AG04449 (cell line): ENCODE measurements at regions of chr10 and their contacts with region 1.

Region 1: GRCh38 chr10:117442944-117443685 is 67.9 kb upstream of the PDZD8 start:
- DNase-seq: no peak
- H3K4me3 ChIP-seq: peak overlapping the region; percentile 27
- CTCF ChIP-seq: peak; percentile 95

Region 2: GRCh38 chr10:117126034-117126433 is 317.1 kb before region 1 on chr10:
- CTCF ChIA-PET with region 1: no interaction called
- POLR2A ChIA-PET with region 1: no interaction called
- DNase-seq: no peak
- H3K4me3 ChIP-seq: no peak overlapping the region
- CTCF ChIP-seq: no peak

Region 3: DNA sequence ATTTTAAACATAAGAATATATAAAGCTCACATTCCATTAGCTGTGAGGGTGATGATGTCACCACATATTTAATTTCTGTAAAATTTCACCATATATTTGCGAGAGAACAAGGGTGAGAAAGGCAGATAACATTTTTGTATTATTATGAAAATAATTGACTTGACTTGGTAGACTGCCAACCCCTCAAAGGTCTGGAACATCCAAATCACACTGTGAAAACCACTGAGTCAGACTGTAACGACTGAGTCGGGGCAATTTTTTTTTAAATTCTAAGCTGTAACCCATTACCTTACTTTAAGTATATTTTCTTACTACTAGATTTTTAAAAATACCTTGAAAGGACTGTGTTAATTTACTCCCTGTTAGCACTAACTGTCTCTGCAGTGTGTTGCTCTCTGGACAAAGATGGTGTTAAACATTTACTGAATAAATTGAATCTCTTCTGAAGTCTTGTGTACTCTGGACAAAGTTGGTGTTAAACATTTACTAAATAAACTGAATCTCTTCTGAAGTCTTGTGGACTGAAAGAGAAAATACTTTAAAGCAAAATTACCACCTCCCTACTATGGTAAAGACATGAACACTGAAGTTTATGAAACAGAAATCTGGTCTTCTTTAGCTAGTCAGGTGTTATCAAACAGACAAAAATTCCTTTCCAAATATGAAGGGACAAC is 82.0 kb before region 1 on chr10:
- CTCF ChIA-PET with region 1: no interaction called
- POLR2A ChIA-PET with region 1: no interaction called
- DNase-seq: no peak
- H3K4me3 ChIP-seq: no peak overlapping the region
- CTCF ChIP-seq: no peak

Region 4: DNA sequence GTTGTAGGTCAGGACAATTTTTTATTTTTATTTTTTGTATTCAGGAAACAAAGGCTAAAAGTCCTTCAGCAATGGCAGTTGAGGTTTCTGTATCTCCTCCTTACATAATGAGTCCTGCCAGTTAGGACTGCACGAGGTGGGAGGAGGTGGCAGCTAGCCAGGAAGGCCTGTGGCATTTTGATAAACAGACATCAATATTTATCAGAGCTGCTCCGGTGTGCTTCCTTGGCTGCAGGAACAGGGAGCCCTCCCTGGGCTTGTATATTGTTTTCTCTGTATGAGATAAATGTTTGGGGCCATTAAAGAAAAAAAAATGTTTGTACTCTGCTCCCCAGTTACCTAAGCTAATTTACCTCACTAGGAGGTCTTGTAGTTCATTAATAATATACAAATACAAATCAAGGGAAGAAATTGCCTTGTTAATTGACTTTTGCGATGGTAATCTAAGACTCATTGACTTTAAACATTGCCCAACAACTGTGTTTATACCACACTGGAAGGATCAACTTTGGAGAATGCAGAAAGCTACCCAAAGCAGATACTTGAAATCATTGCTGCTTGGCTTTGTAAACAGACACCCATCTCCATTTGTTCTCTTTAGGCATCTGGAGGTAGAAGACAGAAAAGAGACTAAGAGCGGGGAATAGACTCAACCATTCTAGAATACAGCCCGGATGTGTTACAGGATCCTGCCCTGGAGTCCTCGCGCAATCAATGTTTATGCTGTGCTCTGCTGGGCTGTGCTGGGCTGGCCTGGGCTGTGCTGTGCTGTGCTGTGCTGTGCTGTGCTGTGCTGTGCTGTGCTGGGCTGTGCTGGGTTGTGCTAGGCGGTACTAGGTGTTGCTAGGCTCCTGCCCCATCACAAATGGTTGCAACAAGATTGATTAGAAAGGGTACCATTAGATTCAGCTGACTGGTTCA is 31.4 kb before region 1 on chr10:
- CTCF ChIA-PET with region 1: interaction called, 10 read pairs
- POLR2A ChIA-PET with region 1: no interaction called
- DNase-seq: no peak
- H3K4me3 ChIP-seq: no peak overlapping the region
- CTCF ChIP-seq: no peak

Region 5: DNA sequence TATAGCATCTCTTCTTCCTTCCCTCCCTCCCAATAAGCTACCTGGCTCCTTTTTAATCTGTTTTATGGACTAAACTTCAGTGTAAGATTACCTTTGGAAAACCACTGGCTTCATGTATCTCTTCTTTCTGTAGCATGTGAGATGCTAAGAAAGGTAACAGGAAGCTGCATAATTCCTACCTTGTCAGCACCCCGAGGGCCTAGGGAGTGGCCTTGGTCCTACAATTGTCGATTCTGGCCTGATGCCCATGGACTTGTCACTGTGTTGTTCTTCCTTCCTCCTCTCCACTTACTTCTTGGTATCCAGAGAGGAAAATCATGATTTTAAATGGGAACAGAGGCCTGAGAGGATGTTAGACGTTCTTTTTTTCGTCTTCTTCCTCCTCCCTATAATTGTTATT is 25.0 kb before region 1 on chr10:
- CTCF ChIA-PET with region 1: interaction called, 10 read pairs
- POLR2A ChIA-PET with region 1: no interaction called
- DNase-seq: no peak
- H3K4me3 ChIP-seq: no peak overlapping the region
- CTCF ChIP-seq: no peak

Region 6: DNA sequence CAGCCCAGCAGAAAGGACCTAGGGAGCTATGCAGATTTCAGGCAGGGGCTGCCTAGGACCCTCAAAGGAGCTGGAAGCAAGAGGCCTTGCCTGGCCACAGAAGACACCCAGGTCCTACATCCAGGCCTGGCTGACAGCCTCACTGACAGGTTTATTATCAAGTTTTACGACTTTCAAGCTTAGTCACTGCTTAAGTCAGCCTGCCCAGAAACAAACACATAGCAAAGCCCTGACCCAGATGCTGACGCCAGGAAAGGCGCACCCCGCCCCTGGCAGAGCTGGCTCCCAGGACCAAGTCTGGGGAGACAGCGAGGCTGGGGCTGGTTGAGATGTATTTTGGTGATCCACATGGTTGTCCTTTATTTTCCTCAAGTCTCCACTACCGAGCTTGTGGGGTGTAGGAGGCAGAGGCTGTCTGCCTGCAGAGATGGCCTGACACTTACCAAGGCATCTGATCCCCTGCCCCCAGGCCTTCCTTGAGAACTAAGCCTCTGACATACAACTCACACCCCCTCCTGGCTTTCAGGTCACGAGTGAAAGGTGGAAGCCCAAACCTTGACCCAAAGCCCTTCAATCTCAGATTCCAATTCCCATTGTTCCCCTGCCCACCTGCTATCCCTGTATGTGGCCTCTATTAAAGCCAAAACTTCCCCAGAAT is 18.8 kb after region 1 on chr10:
- CTCF ChIA-PET with region 1: interaction called, 64 read pairs
- POLR2A ChIA-PET with region 1: interaction called, 20 read pairs
- DNase-seq: peak; percentile 96
- H3K4me3 ChIP-seq: no peak overlapping the region
- CTCF ChIP-seq: no peak

Region 7: DNA sequence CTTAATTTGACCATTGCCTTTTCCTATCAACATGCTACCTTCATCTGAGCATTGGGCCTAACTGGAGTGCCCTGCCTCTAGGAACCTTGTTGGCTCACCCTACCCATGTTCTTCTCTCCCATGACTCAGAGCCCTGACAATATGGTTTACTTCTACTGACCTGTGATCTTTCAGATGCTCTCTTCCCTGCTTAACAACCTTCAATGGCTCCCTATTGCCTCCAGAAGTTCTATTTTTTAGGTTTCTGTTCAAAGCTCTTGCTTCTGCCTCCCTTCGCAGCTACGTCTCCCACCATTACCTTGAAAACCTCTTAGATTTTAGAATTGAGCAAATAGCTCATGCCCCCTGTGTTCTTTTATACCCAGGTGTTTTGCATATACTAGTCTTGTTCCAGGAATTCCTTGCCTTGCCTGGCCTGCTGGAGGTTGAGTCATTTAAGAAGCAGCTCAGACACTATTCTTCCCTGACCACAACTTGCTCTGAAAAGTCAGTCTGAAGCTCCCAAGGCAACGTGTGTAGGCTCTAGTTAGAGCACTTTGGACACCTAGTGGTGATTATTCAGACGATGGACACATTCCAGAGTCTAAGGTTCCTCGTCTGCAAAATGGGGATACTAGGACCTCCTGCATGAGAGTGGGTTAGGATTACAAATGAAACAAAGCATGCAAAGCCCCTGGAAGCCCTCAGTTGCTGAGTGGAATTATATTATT is 35.0 kb after region 1 on chr10:
- CTCF ChIA-PET with region 1: interaction called, 81 read pairs
- POLR2A ChIA-PET with region 1: interaction called, 7 read pairs
- DNase-seq: peak; percentile 82
- H3K4me3 ChIP-seq: no peak overlapping the region
- CTCF ChIP-seq: peak; percentile 35

Region 8: GRCh38 chr10:117537436-117537903 is 94.4 kb after region 1 on chr10:
- CTCF ChIA-PET with region 1: interaction called, 21 read pairs
- POLR2A ChIA-PET with region 1: interaction called, 4 read pairs
- DNase-seq: no peak
- H3K4me3 ChIP-seq: peak overlapping the region; percentile 38
- CTCF ChIP-seq: peak; percentile 47